ENCODE measurements at regions of chr6 and their contacts with region 1.

Region 1: DNA sequence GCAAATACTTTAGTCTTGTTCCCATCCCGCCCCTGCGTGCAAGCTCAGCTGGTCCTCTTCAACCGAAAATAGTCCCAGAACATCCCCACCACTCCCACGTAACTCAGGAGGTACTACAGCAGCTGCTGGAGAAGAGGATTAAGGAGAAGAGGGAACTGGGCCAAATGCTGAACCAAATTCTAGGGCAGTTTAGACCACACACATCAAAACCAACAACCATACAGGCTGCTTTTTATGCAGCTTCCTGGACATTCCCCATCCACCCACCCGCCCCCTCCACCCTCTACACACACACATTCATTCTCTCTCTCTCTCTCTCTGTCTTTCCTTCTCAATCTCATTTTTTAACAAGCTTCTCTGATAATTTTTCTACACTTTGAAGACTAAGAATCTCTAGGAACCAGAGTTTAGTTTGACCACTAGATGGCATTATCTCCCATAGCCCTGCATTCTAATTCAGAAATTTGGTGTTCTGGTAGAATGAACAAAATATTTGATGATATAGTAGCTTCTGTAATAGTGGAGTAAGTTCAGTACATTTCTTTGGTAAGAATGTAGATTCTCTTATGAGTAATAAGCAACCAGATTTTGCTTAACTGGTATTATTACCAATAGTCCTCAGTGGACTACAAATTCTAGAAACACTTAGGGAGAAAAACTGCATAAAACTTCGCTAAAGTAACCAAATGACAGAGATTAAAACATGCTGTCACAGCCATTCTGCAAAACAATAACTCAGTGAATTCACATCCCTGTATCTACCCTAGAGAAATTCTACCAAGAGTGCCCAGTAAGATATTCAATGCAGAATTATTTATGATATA is 52.1 kb upstream of the BEND6 start:
- DNase-seq: no peak
- ATAC-seq: peak; percentile 34

Region 2: GRCh38 chr6:56570413-56571359 is 332.2 kb before region 1 on chr6:
- intact Hi-C with region 1: no loop called
- DNase-seq: no peak
- ATAC-seq: peak; percentile 57

Region 3: DNA sequence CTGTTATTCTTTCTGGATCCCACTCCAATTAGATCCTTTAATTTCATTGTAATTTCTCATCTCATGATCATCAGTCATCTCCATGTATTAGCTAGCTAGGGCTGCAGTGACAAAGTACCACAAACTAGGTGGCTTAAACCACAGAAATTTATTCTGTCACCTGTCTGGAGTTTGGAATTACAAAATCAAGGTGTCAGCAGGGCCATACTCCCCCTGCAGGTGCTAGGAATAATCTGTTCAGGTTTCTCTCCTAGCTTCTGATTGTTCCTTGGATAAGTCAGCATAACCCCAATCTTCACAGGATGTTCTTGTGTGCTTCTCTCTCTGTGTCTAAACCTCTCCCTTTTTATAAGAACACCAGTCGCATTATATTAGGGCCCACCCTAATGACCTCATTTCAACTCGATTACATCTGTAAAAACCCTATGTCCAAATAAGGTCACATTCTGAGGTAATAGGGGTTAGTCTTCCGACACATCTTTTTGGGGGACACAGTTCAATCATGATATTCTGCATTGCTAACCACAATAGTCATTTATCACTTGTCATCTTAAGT is 92.6 kb after region 1 on chr6:
- intact Hi-C with region 1: no loop called
- DNase-seq: no peak
- ATAC-seq: no peak

Region 4: GRCh38 chr6:57021086-57021720 is 118.3 kb after region 1 on chr6:
- intact Hi-C with region 1: loop called (anchors 5 kb)
- DNase-seq: no peak
- ATAC-seq: no peak

Measured in Right ventricle myocardium inferior (tissue), 1 donor.